ENCODE measurements at regions of chr2 and their contacts with region 1.

Region 1: GRCh38 chr2:177148477-177149154 is 64.0 kb upstream of the HNRNPA3 start:
- DNase-seq: peak; percentile 72
- H3K4me3 ChIP-seq: peak overlapping the region; percentile 22 to 48 (median 39)
- H3K27ac ChIP-seq: no peak overlapping the region
- H3K4me1 ChIP-seq: peaks cover 5% of the 10 kb centered on the region
- H3K27me3 ChIP-seq: no peaks in the 10 kb centered on the region
- CTCF ChIP-seq: peak; percentile 92 to 94

Region 2: GRCh38 chr2:176140513-176141317 is 1007.9 kb before region 1 on chr2:
- CTCF ChIA-PET with region 1: no interaction called
- dilution Hi-C with region 1: loop called (anchors 25 kb)
- in situ Hi-C with region 1: no loop called
- intact Hi-C with region 1: no loop called
- DNase-seq: peak; percentile 53
- H3K4me3 ChIP-seq: peak overlapping the region; percentile 65 to 74 (median 70)
- H3K27ac ChIP-seq: no peak overlapping the region
- H3K4me1 ChIP-seq: peaks cover 15% of the 10 kb centered on the region
- H3K27me3 ChIP-seq: peaks cover 29% of the 10 kb centered on the region
- CTCF ChIP-seq: peak; percentile 57 to 87

Region 3: DNA sequence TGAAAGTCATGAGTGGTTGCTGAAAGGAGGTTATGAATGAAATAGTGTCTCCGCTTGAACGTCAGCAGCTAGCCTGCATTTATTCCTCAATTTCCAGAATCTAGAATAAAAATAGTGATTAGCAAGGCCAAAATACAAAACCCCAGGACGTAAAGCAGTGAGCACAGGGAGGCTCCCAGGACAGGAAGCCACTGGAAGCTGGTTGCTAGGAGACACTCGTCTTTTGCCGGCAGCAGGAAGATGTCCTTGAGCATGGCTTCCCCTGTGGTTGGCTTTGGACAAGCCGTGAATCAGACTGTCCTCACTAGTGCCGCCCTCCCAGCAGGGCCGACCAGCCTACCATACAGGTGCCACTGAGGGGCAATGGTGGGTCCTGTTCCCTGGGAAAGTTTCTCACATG is 505.0 kb before region 1 on chr2:
- CTCF ChIA-PET with region 1: no interaction called
- dilution Hi-C with region 1: no loop called
- in situ Hi-C with region 1: no loop called
- intact Hi-C with region 1: loop called (anchors 2 kb)
- DNase-seq: peak; percentile 25
- H3K4me3 ChIP-seq: no peak overlapping the region
- H3K27ac ChIP-seq: no peak overlapping the region
- H3K4me1 ChIP-seq: peaks cover 38% of the 10 kb centered on the region
- H3K27me3 ChIP-seq: no peaks in the 10 kb centered on the region
- CTCF ChIP-seq: no peak

Region 4: DNA sequence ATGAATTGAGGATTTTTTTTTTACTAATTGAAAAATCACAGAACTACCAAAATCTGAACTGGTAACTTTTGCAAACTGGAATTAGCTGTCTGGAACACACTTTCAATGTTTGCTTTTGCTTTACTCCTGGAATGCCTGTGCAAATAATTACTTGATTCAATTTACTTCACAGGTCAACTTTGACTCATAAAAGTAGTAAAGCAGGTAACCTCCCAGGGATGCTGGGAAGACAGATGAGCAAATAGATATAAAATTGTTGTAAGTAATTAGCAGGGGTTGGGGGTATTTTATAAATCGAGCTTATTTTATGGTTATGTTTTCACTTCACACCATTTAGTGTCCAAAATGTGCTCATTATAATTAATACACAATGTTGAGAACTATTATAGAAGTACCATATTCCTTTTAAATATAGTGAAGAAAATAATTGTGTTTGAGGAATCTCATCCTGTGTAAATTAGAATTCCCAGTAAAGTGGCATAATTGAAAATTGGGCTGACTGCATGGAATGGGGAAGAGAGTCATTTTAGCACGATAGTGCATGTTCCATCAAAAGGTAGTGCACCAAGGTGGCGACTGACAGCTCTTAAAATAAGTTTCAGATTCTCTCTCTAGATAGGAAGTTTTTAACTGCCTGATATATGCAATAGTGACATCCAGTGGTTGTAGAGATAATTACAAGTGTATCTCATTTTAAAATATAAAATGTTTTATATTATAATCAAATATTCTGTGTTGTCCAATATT is 334.1 kb before region 1 on chr2:
- CTCF ChIA-PET with region 1: no interaction called
- dilution Hi-C with region 1: no loop called
- in situ Hi-C with region 1: no loop called
- intact Hi-C with region 1: loop called (anchors 1 kb)
- DNase-seq: no peak
- H3K4me3 ChIP-seq: no peak overlapping the region
- H3K27ac ChIP-seq: no peak overlapping the region
- H3K4me1 ChIP-seq: no peaks in the 10 kb centered on the region
- H3K27me3 ChIP-seq: peaks cover 2% of the 10 kb centered on the region
- CTCF ChIP-seq: peak; percentile 39 to 53

Region 5: DNA sequence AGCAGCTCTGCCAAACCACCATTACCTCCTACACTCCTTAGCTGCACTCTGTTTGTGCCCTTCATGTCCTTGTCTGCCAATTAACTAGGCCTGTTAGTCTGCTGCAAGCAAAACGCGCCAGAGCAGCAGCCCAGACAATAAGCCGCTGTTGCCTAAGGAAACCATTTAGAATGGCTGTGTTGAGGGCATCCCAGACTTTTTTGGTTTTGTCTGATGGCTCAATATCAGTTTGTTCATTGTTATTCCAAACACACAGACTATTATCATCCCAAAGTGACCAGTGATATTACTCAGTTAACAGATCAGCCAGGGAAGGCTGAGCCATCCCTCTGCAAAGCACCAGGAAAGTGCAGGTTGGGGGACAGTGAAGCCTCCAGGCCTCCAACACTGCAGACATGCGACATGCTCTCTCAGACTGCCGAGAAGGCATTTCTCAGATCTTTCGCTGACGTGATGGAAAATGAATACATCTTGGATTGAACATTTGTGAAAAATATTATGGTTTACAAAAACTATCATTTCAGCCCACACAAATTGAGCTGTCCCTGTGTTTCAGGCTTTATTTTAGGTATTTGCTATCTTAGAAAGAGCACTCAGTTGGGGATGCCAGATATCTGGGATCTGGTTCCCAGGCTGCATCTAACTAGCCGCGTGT is 118.0 kb before region 1 on chr2:
- CTCF ChIA-PET with region 1: no interaction called
- dilution Hi-C with region 1: no loop called
- in situ Hi-C with region 1: no loop called
- intact Hi-C with region 1: loop called (anchors 2 kb)
- DNase-seq: no peak
- H3K4me3 ChIP-seq: no peak overlapping the region
- H3K27ac ChIP-seq: no peak overlapping the region
- H3K4me1 ChIP-seq: no peaks in the 10 kb centered on the region
- H3K27me3 ChIP-seq: peaks cover 5% of the 10 kb centered on the region
- CTCF ChIP-seq: no peak